ENCODE measurements at regions of chr5 and their contacts with region 1.

Region 1: DNA sequence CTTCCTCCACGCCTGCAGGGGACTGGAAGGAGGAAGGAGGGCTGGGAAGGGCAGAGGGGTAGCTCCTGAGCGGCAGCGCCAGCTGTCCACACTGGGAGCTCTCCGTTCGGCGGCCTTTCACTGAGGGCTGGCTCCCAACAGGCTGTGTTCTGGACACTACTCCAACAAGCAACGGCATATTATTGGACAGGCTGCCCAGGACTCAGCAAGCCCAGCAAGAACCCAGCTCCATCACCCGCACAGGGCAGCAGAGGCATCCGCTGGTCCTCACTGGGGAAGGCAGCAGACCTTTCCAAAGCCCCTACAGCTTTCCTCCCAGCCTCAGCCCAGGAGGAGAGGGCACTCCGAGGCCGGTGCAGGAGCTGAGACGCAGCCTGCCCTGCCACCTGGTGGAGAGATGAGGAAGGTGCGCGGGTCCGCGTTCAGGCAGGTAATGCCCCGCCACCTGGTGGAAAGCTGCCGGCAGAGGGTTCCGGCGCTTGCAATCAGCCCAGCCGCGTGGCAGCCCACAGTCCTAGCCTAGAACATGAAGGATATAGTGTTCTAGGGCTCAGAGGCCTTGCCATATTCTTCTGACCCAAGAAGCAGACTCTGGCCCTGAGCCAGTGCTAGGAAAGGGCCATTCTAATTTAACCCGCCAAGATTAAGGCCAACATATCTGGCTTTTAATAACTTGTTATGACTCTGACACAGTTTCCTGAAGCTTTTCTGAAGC is 74.4 kb downstream of the NRG2 start:
- DNase-seq: peak; percentile 90
- H3K4me3 ChIP-seq: no peak overlapping the region
- H3K27ac ChIP-seq: no peak overlapping the region
- H3K4me1 ChIP-seq: no peaks in the 10 kb centered on the region
- H3K27me3 ChIP-seq: no peaks in the 10 kb centered on the region
- CTCF ChIP-seq: peak; percentile 97 to 100 (median 100)
- POLR2A ChIP-seq: no peak

Region 2: DNA sequence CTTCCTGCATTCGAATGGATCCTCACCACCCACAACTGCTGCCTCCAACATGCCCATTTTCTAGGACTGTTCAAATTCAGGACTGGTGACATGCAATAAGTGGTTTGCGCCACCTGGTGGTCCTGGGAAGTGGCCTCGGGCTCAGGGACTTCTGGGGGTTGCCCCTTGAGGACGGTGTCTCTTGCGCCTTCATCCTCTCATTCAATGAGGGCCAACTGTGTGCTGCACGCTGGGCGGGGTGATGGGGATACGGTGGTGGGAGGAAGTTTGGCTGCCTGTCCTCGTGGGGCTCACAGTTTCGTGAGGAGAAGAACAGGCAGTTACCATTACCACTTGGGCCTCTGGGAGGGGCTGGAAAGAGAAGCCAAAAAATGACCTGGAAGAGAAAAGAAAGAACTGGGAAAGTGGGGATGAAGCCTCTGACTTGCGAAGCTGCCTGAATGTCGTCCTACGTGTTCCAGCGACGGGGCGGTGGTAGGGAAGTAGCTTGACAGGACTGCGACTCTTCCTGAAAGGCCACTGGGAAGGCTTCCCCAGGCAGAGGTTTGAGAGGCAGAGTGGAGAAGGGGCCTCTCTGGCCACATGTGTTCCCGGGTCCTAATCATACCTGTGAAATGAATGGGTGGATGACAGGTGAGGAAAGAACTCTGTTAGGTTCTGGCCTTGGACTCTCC is 124.1 kb before region 1 on chr5:
- intact Hi-C with region 1: loop called (anchors 5 kb)
- DNase-seq: peak; percentile 47
- H3K4me3 ChIP-seq: no peak overlapping the region
- H3K27ac ChIP-seq: no peak overlapping the region
- H3K4me1 ChIP-seq: no peaks in the 10 kb centered on the region
- H3K27me3 ChIP-seq: no peaks in the 10 kb centered on the region
- CTCF ChIP-seq: peak; percentile 20 to 69 (median 53)
- POLR2A ChIP-seq: no peak

Region 3: DNA sequence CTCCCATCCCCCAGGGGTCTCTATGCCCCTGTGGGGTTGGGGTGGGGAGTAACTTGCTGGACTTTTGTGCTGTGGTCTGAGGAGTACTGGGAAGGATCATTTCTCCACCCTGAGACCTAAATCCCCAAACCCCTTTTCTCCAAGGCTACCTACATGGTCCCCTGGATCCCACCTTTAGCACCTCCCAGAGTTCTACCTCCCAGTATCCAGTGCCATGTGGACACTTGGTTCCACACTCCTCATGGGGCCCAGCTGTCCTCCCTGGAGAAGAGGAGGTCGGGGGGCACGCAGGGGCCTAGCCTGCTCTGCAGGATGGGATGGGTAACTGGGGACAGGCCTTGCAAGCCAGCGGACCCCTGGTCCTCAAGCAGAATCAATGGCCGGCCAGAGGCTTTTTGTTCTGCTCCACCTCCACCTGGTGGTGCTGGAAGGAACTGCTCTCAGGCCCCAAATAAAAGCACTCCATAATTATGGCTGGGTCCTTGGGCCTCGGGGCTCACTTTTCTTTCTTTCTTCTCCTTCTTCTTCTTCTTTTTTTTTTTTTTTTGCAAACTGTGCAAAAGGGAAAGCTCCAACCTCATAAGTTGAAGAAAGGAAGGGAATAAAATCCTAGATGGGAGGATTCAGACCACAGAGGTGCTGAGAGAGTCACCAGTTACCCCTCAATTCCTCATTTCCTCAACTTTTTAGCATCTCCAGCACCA is 104.7 kb before region 1 on chr5:
- intact Hi-C with region 1: loop called (anchors 5 kb)
- DNase-seq: peak; percentile 62
- H3K4me3 ChIP-seq: no peak overlapping the region
- H3K27ac ChIP-seq: peak overlapping the region; percentile 31 to 62
- H3K4me1 ChIP-seq: peaks cover 4% of the 10 kb centered on the region
- H3K27me3 ChIP-seq: no peaks in the 10 kb centered on the region
- CTCF ChIP-seq: peak; percentile 75 to 87 (median 80)
- POLR2A ChIP-seq: no peak

Measured in prostate gland (tissue), 2 donors.